Right ventricle myocardium inferior (tissue), 1 donor: ENCODE measurements at regions of chr3 and their contacts with region 1.

Region 1: DNA sequence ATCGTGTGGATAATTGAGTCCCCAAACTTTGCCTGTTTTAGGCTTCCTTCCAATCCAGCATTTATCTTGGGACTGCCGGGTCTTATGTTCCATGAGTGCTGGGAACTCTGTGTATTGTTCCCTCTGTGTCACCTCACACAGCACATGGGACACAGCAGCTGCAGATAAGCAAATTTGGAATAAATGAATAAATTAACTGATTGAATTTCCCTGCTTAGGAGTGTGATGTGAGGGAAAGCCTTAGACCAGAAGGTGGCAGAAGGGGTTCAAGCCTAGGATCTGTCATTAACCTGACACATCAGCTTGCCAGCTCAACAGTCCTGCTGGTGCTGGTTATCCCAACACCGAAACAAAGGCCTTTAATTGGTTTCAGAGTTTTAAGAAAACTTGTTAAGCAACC is 114.3 kb downstream of the OXSM start:
- DNase-seq: no peak
- ATAC-seq: peak; percentile 52

Region 2: DNA sequence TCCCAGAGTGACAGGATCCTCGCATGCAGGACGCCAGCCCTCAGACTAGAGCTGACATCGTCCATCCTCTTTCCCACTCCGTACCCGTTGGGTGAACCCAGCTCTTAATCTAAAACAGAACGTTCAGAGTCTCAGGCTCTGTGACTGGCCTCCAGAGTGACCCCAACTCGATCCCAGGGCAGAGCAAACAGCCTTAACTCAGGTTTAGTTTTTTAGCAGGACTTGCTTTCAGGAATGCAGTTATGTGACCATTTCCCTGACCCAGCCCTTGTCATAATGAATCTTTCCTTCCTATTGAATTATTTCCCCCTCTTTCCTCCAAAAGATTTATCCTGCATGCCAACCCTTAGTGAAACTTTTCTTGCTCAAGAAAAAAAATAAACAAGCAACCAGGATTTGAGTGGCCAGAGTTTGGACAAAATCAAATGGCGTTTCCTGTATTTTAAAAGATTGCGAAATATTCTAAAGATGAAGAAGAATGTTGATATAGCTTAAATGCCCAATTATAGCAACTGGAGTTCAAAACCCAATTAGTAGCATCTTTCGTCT is 523.9 kb before region 1 on chr3:
- intact Hi-C with region 1: no loop called
- DNase-seq: no peak
- ATAC-seq: no peak

Region 3: DNA sequence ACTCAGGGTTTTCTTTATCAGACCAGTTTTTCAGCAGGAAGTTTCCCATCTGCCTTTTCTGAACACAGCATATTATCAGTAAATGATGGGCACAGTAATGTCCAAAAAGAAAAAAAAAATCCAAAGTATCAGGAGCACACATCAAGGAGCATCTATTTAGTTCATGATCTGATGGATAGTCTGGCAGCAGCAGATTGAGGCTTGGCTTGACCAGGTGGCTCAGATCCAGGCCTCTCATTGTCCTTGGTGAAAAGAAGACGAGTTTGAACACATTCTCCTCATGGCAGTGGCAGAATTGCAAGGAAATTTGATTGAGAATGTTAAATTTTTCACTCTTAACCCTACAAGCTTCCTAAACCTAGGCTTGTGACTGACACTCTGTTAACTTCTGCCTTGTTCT is 78.5 kb after region 1 on chr3:
- intact Hi-C with region 1: no loop called
- DNase-seq: no peak
- ATAC-seq: no peak

Region 4: DNA sequence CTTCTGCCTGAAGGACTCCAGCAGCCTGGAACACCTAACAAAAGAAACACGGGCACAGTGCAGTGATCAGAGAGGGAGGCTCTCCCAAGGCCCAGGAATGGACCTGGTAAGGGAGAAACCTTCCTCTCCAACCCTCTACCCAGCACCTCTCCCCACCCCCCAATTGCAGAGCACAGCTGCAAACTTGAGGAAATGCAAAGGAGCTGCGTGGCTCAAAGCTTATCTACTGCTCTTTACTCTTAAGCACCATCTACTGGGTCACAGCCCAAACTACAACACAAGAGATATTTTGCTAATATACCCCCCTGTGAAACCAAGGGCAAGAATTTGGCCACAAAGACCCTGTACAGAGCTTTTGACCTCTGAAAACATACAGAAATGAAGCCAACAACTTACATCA is 214.0 kb after region 1 on chr3:
- intact Hi-C with region 1: loop called (anchors 2 kb)
- DNase-seq: no peak
- ATAC-seq: no peak

Region 5: GRCh38 chr3:26712211-26713026 is 808.2 kb after region 1 on chr3:
- intact Hi-C with region 1: loop called (anchors 5 kb)
- DNase-seq: no peak
- ATAC-seq: no peak